CD4-positive, alpha-beta T cell (primary cell): ENCODE measurements at regions of chr16 and their contacts with region 1.

Region 1: DNA sequence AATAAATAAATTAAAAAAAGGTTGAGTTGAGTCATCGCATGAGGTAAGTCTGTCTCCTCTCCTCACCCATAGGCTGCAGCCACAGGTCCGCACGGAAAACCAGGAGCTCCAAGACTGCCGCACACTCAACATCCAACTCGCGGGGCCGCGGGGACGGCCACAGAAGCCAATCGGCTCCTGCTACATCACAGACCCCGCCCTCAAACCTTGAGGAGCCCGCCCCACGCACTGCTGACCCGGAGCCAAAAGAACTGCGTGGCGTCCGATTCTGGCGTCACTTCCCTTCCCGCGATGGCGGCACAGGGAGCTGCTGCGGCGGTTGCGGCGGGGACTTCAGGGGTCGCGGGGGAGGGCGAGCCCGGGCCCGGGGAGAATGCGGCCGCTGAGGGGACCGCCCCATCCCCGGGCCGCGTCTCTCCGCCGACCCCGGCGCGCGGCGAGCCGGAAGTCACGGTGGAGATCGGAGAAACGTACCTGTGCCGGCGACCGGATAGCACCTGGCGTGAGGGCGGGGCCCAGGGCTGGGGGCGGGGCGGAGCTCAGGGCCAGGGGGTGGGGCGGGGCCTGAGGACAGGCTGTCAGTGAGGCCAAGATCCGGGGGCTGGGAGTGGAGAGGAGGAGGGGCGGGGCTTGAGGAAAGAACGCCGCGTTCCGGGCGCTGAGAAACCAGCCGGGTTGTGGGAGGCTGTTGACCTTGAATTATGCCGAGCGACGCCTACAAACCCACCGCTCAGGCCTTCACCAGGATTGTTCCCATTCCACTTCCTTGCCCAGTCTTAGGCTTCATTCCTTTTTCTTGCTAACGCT is at the start of gene KAT8:
- DNase-seq: peak; percentile 93 to 99 (median 96)
- ATAC-seq: peak; percentile 91
- H3K4me3 ChIP-seq: peak within 1 kb of the TSS; percentile 68
- H3K4me3 Mint-ChIP-seq: peak within 1 kb of the TSS; percentile 88
- H3K27ac ChIP-seq: peak within 1 kb of the TSS; percentile 87 to 95
- H3K27ac Mint-ChIP-seq: peak within 1 kb of the TSS; percentile 83
- H3K4me1 ChIP-seq: peaks cover 23% of the 10 kb centered on the region
- H3K4me1 Mint-ChIP-seq: peaks cover 17% of the 10 kb centered on the region
- H3K27me3 ChIP-seq: no peaks in the 10 kb centered on the region
- H3K27me3 Mint-ChIP-seq: no peaks in the 10 kb centered on the region
- CTCF ChIP-seq: no peak
- total RNA-seq, gene KAT8: 114 to 124 TPM

Region 2: GRCh38 chr16:29973384-29974246 is 1144.0 kb before region 1 on chr16 and contains the start of gene TAOK2:
- CTCF ChIA-PET with region 1: no interaction called
- POLR2A ChIA-PET with region 1: no interaction called
- intact Hi-C with region 1: no loop called
- DNase-seq: peak; percentile 76 to 98 (median 90)
- ATAC-seq: peak; percentile 87
- H3K4me3 ChIP-seq: peak within 1 kb of the TSS; percentile 99
- H3K4me3 Mint-ChIP-seq: peak within 1 kb of the TSS; percentile 98
- H3K27ac ChIP-seq: peak within 1 kb of the TSS; percentile 70 to 83
- H3K27ac Mint-ChIP-seq: peak within 1 kb of the TSS; percentile 84
- H3K4me1 ChIP-seq: peaks cover 39% of the 10 kb centered on the region
- H3K4me1 Mint-ChIP-seq: peaks cover 50% of the 10 kb centered on the region
- H3K27me3 ChIP-seq: no peaks in the 10 kb centered on the region
- H3K27me3 Mint-ChIP-seq: no peaks in the 10 kb centered on the region
- CTCF ChIP-seq: no peak
- total RNA-seq, gene TAOK2: 13.1 to 14.1 TPM

Region 3: DNA sequence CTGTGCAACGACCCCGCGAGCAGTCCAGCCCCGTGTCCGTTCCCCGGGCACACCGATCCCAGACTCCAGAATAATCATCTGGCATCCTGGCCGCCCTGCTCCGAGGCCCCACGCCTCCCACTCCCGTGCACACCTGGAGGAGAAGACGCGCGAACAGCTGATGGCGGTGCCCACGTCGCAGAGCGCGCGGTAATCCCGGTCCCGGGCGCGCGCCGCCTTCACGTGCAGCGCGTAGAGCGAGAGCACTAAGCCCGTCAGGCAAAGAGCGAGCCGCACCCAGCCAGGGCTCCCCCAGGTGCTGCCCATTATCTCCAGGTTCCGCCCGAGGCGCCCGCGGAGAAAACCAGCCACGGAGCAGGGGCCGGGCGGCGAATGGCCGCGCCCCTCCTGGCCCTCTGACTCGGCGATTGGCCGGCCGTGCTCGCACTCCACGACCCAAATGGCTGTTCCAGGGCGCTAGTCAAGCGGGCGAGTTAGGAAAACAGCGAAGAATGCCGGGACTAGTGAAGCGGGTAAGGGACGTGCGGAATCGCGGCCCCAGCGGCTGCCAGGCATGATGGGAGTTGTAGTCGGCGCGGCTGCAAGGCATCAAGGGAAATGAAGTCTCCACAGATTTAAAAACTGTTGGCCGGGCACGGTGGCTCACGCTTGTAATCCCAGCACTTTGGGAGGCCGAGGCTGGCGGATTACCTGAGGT is 23.0 kb before region 1 on chr16 and contains the start of gene VKORC1:
- CTCF ChIA-PET with region 1: no interaction called
- POLR2A ChIA-PET with region 1: interaction called, 21 read pairs
- intact Hi-C with region 1: no loop called
- DNase-seq: peak; percentile 75 to 95 (median 82)
- ATAC-seq: peak; percentile 90
- H3K4me3 ChIP-seq: peak within 1 kb of the TSS; percentile 82
- H3K4me3 Mint-ChIP-seq: peak within 1 kb of the TSS; percentile 93
- H3K27ac ChIP-seq: peak within 1 kb of the TSS; percentile 84
- H3K27ac Mint-ChIP-seq: peak within 1 kb of the TSS; percentile 83
- H3K4me1 ChIP-seq: peaks cover 31% of the 10 kb centered on the region
- H3K4me1 Mint-ChIP-seq: peaks cover 34% of the 10 kb centered on the region
- H3K27me3 ChIP-seq: no peaks in the 10 kb centered on the region
- H3K27me3 Mint-ChIP-seq: no peaks in the 10 kb centered on the region
- CTCF ChIP-seq: no peak
- total RNA-seq, gene VKORC1: 19.0 to 19.2 TPM

Region 4: DNA sequence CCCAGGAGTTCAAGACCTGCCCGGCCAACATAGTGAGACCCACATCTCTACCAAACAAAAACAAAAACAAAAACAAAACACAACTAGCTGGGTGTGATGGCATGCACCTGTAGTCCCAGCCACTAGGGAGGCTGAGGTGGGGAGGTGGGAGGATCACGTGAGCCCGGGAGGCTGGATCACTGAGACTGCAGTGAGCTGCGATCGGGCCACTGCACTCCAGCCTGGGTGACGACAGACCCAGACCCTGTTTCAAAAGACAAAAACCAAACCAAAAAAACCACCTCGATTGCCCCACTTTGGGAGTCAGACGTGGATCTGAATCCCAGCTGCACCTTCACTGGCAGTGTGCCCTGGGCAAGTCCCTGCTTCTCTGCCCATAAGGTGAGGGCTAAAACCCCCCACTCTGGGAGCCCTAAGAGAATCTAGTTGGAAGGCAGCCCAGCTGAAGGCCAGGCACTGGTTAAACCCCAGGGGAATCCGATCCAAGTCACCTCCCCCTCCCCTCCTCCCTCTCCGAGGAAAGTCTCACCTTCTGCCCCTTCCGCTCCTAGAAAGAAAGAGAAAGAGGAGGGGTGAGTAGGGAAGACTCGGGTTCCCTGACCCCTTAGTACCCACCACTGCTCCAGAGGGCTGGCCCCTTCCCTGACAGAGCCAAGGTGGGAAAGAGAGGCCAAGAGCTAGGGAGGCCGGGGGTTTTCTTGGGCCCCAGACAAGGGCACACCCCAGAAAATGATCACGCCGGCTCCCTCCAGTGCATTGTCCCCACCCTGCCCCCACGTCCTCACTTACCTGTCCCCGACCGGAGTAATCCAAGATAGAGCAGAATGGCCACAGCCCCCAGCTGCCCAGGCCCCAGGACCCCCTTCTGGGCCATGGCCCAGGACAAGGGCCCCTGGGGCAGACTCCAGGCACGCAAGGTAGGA is 17.3 kb after region 1 on chr16:
- CTCF ChIA-PET with region 1: no interaction called
- POLR2A ChIA-PET with region 1: interaction called, 11 read pairs
- intact Hi-C with region 1: no loop called
- DNase-seq: no peak
- ATAC-seq: no peak
- H3K4me3 ChIP-seq: no peak overlapping the region
- H3K4me3 Mint-ChIP-seq: no peak overlapping the region
- H3K27ac ChIP-seq: no peak overlapping the region
- H3K27ac Mint-ChIP-seq: no peak overlapping the region
- H3K4me1 ChIP-seq: no peaks in the 10 kb centered on the region
- H3K4me1 Mint-ChIP-seq: no peaks in the 10 kb centered on the region
- H3K27me3 ChIP-seq: no peaks in the 10 kb centered on the region
- H3K27me3 Mint-ChIP-seq: no peaks in the 10 kb centered on the region
- CTCF ChIP-seq: no peak

Region 5: DNA sequence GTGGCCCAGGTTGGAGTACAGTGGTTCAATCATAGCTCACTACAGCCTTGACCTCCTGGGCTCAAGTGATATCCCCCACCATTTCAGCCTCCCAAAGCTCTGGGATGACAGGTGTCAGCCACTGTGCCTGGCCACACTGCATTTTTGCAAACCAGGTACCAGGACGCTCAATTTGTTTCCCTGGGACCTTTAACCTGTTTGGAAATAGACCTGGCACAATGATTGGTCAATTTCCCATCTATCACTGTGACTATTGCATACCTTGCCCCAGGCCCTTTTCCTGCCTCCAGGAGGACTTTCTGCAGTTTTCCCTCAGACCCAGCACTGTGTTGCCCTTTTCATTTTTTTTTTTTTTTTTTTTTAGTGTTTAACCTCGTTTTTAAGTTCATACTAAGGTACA is 51.3 kb after region 1 on chr16:
- CTCF ChIA-PET with region 1: no interaction called
- POLR2A ChIA-PET with region 1: no interaction called
- intact Hi-C with region 1: no loop called
- DNase-seq: no peak
- ATAC-seq: no peak
- H3K4me3 ChIP-seq: no peak overlapping the region
- H3K4me3 Mint-ChIP-seq: no peak overlapping the region
- H3K27ac ChIP-seq: no peak overlapping the region
- H3K27ac Mint-ChIP-seq: no peak overlapping the region
- H3K4me1 ChIP-seq: no peaks in the 10 kb centered on the region
- H3K4me1 Mint-ChIP-seq: no peaks in the 10 kb centered on the region
- H3K27me3 ChIP-seq: no peaks in the 10 kb centered on the region
- H3K27me3 Mint-ChIP-seq: no peaks in the 10 kb centered on the region
- CTCF ChIP-seq: no peak